Activated CD4-positive, alpha-beta memory T cell treated with anti-CD3 and anti-CD28 coated beads, Interleukin-2, amount 10 ng/mL, durations not matched to agents 7 days and 5 days (primary cell): ENCODE measurements at regions of chr5 and their contacts with region 1.

Region 1: DNA sequence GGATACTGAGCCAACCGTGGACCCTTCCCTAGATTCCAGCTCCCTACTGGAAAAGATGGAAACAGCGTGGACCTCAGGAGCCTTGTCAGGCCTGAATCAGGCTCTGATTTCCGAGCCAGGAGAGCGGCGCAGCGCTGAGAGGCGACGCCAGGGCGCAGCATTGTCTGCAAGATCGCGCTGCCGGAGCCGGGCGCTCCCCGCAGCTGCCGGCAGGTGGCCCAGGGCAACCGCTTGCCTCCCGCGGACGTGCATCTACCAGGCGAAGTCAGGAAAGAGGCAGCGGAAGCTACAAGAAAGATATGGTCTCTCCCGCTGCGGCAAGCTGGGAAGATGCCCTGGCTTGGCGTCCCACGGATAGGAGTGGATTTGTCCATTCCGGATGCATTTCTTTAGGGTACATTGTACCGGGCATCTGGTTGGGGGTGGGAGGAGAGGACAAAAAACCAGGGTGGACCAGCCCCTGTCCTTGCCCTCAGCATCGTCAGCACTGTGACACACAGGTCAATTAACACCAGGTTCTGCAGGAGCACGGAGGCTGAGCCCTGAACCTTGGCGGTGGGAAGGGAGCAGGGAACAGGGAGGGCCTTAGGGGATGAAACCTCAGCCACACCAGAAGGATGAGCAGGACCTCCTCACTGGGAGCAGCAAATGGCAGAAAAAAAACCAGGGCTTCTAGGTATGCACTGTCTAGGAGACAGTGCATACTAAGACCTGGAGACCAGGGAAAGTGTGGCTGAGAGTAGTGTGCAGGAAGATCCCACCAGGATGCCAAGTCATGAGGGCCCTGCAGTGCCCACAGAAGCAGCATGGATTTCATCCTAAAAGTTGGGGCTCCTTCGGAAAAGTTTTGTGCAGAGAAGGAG is 55.9 kb downstream of the SFXN1 start:
- DNase-seq: peak; percentile 86
- H3K4me3 Mint-ChIP-seq: peak overlapping the region; percentile 45
- H3K27ac Mint-ChIP-seq: no peak overlapping the region
- H3K4me1 Mint-ChIP-seq: peaks cover 35% of the 10 kb centered on the region
- H3K27me3 Mint-ChIP-seq: no peaks in the 10 kb centered on the region

Region 2: DNA sequence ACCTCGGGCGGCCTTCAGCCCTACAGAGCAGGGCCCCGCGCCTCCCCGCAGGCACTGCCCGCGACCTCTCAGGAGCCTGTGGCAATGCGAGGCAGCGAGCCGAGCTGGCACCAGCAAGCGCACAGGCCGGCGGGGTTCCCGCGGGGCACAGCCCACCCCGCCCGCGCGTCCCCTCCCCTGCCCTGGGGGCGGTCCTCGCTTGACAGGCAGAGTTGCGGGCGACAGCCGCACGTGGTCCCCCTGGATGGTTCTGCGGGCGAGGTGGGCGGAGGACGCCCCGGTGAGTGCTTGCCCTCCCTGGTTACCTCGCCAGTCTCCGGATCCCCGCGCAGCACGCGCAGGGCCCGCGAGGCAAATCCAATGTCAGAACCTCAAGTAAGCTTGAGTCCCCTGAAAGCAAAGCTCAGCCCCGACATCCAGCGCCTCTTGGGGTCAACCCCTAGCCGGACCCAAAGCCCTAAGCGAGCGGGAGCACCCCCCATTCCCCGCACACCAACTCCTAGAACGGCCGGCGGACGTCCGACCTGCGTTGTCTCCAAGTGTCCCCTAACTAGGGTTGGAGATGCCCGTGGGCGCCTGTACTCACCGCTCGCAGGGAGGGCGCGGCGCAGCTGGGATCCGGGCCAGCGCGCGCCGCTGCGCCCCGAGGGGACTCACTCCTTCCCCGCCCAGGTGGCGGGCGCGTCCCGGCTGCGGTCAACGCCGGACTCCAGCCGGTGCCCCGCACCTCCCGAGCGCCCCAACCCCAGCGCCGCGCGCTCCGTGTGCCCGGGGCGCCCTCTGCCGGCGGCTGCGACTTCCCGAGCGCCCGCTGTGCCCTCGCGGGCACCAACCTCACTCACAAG is 90.0 kb before region 1 on chr5 and contains the start of gene DRD1:
- CTCF ChIA-PET with region 1: no interaction called
- POLR2A ChIA-PET with region 1: no interaction called
- DNase-seq: peak; percentile 49
- H3K4me3 Mint-ChIP-seq: no peak within 1 kb of the TSS
- H3K27ac Mint-ChIP-seq: no peak within 1 kb of the TSS
- H3K4me1 Mint-ChIP-seq: peaks cover 5% of the 10 kb centered on the region
- H3K27me3 Mint-ChIP-seq: peaks cover 69% of the 10 kb centered on the region
- total RNA-seq, gene DRD1: not detected

Region 3: GRCh38 chr5:175517818-175518450 is 16.4 kb before region 1 on chr5:
- CTCF ChIA-PET with region 1: interaction called, 14 read pairs
- POLR2A ChIA-PET with region 1: interaction called, 5 read pairs
- DNase-seq: peak; percentile 83
- H3K4me3 Mint-ChIP-seq: peak overlapping the region; percentile 64
- H3K27ac Mint-ChIP-seq: peak overlapping the region; percentile 94
- H3K4me1 Mint-ChIP-seq: peaks cover 77% of the 10 kb centered on the region
- H3K27me3 Mint-ChIP-seq: no peaks in the 10 kb centered on the region

Region 4: GRCh38 chr5:175548626-175549311 is 14.5 kb after region 1 on chr5:
- CTCF ChIA-PET with region 1: interaction called, 13 read pairs
- POLR2A ChIA-PET with region 1: no interaction called
- DNase-seq: no peak
- H3K4me3 Mint-ChIP-seq: no peak overlapping the region
- H3K27ac Mint-ChIP-seq: no peak overlapping the region
- H3K4me1 Mint-ChIP-seq: no peaks in the 10 kb centered on the region
- H3K27me3 Mint-ChIP-seq: peaks cover 35% of the 10 kb centered on the region

Region 5: DNA sequence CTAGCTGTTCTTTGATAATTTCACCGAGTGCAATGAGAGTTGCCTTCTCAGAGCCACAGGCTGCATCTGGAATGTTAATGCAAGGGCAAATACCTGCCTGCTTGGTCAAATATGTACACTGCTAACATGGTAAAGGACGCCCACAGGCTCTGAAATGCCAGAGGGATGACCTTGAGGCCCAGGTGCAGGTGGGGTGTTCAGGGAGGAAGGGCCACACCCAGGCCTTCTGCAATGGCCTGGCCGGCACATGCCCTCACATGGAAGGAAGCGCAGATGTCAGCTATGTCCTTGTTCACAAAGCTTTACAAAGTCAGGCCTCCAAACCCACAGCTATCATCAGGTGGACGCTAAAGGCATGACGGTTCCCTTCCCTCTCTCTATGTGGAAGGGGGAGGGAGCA is 172.2 kb after region 1 on chr5:
- CTCF ChIA-PET with region 1: interaction called, 51 read pairs
- POLR2A ChIA-PET with region 1: interaction called, 4 read pairs
- DNase-seq: no peak
- H3K4me3 Mint-ChIP-seq: no peak overlapping the region
- H3K27ac Mint-ChIP-seq: no peak overlapping the region
- H3K4me1 Mint-ChIP-seq: peaks cover 4% of the 10 kb centered on the region
- H3K27me3 Mint-ChIP-seq: no peaks in the 10 kb centered on the region

Region 6: DNA sequence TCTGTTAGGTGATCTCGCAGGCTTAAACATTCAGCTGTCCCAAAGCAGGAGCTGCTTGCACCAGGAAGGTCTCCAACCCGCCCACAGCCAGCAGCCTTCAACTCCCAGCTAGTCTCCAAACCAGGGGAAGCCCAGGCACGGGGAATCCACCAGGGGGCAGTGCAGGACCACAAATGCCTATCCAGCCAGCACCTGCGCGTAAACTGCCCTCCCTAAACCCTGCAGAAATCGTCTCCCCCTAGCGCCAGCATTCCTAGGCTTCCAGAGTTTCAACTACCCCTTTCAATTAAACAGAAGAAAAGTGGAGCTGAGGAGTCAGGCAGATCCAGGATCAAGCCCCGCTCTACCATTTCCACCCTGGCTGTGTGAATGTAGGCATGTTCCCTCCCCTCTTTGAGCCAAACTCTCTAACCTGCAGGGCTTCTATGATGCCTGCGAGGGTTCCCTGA is 195.6 kb after region 1 on chr5:
- CTCF ChIA-PET with region 1: interaction called, 50 read pairs
- POLR2A ChIA-PET with region 1: interaction called, 3 read pairs
- DNase-seq: peak; percentile 91
- H3K4me3 Mint-ChIP-seq: no peak overlapping the region
- H3K27ac Mint-ChIP-seq: no peak overlapping the region
- H3K4me1 Mint-ChIP-seq: peaks cover 3% of the 10 kb centered on the region
- H3K27me3 Mint-ChIP-seq: peaks cover 10% of the 10 kb centered on the region